Adrenal gland (tissue), 19 donors: ENCODE measurements at regions of chr19 and their contacts with region 1.

Region 1: GRCh38 chr19:18281082-18282020 is at the start of gene JUND:
- DNase-seq: peak; percentile 98 to 99 (median 99)
- H3K4me3 ChIP-seq: peak within 1 kb of the TSS; percentile 85 to 100 (median 96)
- H3K27ac ChIP-seq: peak within 1 kb of the TSS; percentile 99 to 100 (median 100)
- H3K4me1 ChIP-seq: peaks cover 29 to 55% of the 10 kb centered on the region in 2 donors
- H3K27me3 ChIP-seq: no peaks in the 10 kb centered on the region
- CTCF ChIP-seq: peak in 1 of 6 experiments; percentile 31
- POLR2A ChIP-seq: peak; percentile 97 to 100
- total RNA-seq, gene JUND: 61.9 to 533 (median 350) TPM

Region 2: DNA sequence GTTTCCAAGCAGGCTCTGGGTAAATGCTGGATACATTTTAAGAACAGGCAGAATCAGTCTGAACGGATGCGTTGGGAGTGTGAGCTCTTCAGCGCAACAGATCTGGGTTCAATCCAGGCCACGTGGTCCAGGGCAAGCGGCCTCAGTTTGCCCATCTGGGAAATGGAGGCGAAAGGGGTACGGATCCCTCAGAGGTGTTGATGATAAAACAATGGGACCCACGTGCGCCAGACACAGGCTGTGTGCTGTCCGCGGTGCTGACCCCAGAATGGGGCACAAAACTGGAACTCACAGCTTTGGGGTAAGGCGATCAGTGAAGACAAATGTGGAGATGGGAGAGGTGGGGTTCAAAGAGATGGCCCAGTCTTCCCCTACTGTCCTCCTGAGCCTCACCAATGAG is 42.0 kb before region 1 on chr19:
- intact Hi-C with region 1: no loop called
- DNase-seq: no peak
- H3K4me3 ChIP-seq: no peak overlapping the region
- H3K27ac ChIP-seq: no peak overlapping the region
- H3K4me1 ChIP-seq: no peaks in the 10 kb centered on the region
- H3K27me3 ChIP-seq: peaks cover 10% of the 10 kb centered on the region
- CTCF ChIP-seq: no peak
- POLR2A ChIP-seq: no peak

Region 3: GRCh38 chr19:18322759-18323460 is 41.6 kb after region 1 on chr19 and contains the start of gene LSM4:
- intact Hi-C with region 1: loop called (anchors 2 to 5 kb)
- DNase-seq: peak; percentile 98 to 99 (median 99)
- H3K4me3 ChIP-seq: peak within 1 kb of the TSS; percentile 39 to 76 (median 62)
- H3K27ac ChIP-seq: peak within 1 kb of the TSS; percentile 85 to 98 (median 93)
- H3K4me1 ChIP-seq: peaks cover 39 to 56% of the 10 kb centered on the region in 2 donors
- H3K27me3 ChIP-seq: no peaks in the 10 kb centered on the region
- CTCF ChIP-seq: peak in 3 of 6 experiments; percentile 19 to 36 (median 25)
- POLR2A ChIP-seq: peak; percentile 71 to 85
- total RNA-seq, gene LSM4: 107 to 290 (median 169) TPM

Region 4: DNA sequence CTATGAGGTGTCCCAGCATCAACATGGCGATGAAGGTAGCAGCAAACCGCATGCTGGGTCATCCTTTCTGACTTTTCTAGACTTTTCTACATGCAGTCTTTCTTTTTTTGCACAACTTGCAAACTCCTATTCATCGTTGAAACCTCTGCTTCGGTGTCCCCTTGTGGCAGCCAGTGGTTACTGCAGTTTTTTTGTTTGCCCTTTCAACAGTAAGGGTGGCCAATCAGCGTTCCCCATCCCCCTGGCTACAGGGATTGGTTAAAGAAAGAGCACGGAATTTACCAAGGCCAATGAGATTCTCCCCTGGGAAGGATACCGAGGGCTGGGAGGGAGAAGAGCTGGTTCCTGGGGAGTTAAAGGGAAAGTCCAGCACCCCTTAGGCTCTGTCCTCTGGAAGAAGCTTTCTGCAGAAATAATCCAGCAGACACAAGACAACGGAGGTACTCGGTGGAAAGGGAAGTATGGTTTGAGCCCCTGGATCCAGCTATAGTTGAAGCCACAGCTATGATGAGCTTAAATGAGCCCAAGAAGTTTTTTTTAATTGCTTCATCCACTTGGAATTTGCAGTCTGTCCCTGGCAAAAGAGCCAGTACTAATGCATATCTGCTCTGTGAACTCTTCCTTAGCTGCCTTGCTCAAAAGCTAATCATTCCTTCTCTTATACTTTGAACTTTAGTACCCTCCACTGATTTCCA is 47.1 kb after region 1 on chr19:
- intact Hi-C with region 1: loop called (anchors 2 to 5 kb)
- DNase-seq: peak; percentile 93 to 99 (median 97)
- H3K4me3 ChIP-seq: peak overlapping the region in 1 of 4 donors; percentile 47
- H3K27ac ChIP-seq: peak overlapping the region; percentile 25 to 86 (median 66)
- H3K4me1 ChIP-seq: peaks cover 13 to 19% of the 10 kb centered on the region in 2 donors
- H3K27me3 ChIP-seq: no peaks in the 10 kb centered on the region
- CTCF ChIP-seq: peak; percentile 92 to 99 (median 99)
- POLR2A ChIP-seq: peak; percentile 54 to 97

Region 5: GRCh38 chr19:18401580-18402112 is 120.3 kb after region 1 on chr19:
- intact Hi-C with region 1: loop called in 1 of 2 experiments (anchors 10 kb)
- DNase-seq: peak in 6 of 7 donors; percentile 57 to 82 (median 74)
- H3K4me3 ChIP-seq: no peak overlapping the region
- H3K27ac ChIP-seq: peak overlapping the region in 1 of 5 donors; percentile 60
- H3K4me1 ChIP-seq: peaks cover 7 to 15% of the 10 kb centered on the region in 2 donors
- H3K27me3 ChIP-seq: no peaks in the 10 kb centered on the region
- CTCF ChIP-seq: peak in 4 of 6 experiments; percentile 26 to 38 (median 30)
- POLR2A ChIP-seq: no peak